Left ventricle myocardium superior (tissue), 1 donor: ENCODE measurements at regions of chr4 and their contacts with region 1.

Region 1: GRCh38 chr4:99894161-99894997 is at the start of gene LAMTOR3:
- DNase-seq: peak; percentile 93
- ATAC-seq: peak; percentile 99
- total RNA-seq, gene LAMTOR3: 38.9 TPM

Region 2: GRCh38 chr4:98887145-98887544 is 1007.2 kb before region 1 on chr4:
- intact Hi-C with region 1: no loop called
- DNase-seq: no peak
- ATAC-seq: no peak

Region 3: DNA sequence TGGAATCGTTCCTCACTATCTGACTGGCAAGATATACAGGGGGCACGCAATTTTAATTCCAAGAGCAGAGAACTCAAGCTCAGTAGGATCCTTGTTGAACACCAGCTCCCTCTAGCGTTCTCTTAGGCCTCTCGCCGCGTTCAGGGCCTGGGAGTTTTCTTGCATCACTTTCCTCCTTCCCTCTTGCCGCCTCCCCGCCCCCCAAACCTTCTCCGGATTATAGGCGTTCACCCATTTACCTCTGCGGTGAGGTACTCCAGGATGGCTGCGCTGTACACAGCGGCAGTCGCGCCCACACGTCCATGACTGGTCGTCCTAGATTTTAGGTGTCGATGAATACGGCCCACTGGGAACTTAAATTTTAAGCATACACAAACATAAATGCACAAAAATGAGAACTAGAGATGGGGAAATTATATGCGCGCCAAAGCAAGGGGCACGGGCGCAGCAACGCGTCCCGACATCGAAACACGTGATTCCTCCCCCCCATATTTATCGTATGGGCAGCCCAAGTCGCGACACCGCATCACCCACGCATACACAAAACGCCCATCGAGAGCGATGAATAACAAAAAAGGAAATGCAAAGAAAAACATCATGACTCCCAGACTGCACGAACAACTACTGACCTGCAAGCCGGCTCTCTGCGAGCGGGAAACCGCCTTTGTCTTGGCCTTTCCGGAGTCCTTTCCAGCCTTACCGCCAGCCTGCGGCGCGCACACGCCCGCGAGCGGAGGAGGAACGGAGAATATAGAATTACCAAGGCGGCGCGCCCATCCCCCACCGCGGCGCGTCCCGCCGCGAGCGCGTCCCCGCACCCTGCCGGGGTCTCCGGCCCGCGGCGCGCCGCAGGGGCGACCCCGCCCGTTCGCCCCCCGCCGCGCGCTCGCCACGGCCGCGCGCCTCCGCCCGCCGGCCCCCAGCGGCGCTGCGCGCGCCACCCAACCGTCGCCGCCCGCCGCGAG is 54.9 kb after region 1 on chr4:
- intact Hi-C with region 1: loop called (anchors 5 kb)
- DNase-seq: peak; percentile 86
- ATAC-seq: peak; percentile 31

Region 4: DNA sequence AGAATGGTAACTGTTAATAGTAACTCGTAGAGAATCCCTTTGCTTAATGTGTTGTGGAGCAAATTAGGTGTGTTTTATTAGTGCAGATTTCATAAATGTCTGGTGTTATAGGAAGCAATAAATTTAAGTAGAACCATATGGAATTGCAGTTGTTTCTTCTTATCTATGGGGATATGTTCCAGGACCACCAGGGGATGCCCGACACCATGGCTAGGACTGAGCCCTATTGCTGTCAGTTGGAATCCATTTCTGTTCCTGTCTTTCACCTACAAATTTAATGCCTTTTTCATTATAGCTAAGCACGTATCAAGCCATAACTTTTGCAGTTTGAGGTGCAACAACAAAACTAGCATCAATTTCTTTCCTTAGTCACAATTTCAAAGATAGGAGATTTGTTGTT is 223.4 kb after region 1 on chr4:
- intact Hi-C with region 1: no loop called
- DNase-seq: no peak
- ATAC-seq: no peak